CD4-positive, alpha-beta memory T cell (primary cell): ENCODE measurements at regions of chr5 and their contacts with region 1.

Region 1: DNA sequence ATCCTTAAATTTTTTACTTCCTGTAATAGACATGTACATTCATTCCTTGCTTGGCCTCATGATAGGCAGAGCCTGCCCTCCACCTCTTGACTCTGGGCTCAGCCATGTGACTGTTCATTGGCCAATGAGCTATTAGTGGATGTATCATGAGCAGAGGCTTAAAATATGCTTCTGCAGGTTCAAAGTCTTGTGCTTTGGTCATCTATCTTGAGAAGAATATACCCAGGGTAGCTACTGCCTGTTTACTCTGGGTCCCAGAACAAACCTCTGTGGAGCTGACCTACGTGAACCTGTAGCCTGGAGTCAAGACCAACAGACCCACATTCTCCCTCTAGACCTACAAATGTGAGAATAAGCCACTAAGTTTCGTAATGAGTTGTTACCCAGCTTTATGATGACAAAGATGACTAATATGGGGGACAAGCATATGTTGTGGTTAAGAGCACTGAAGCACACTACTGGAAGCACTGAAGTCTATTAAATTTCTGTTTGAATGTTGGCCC is 244.4 kb downstream of the MAST4 start:
- DNase-seq: no peak
- H3K4me3 ChIP-seq: no peak overlapping the region
- H3K4me3 Mint-ChIP-seq: no peak overlapping the region
- H3K27ac ChIP-seq: no peak overlapping the region
- H3K27ac Mint-ChIP-seq: no peak overlapping the region
- H3K4me1 ChIP-seq: no peaks in the 10 kb centered on the region
- H3K4me1 Mint-ChIP-seq: peaks cover 0 to 9% (median 0%) of the 10 kb centered on the region in 4 donors
- H3K27me3 ChIP-seq: no peaks in the 10 kb centered on the region
- H3K27me3 Mint-ChIP-seq: peaks cover 0 to 4% of the 10 kb centered on the region in 2 donors

Region 2: GRCh38 chr5:66828548-66829357 is 11.8 kb before region 1 on chr5:
- CTCF ChIA-PET with region 1: interaction called, 14 read pairs
- POLR2A ChIA-PET with region 1: interaction called, 3 read pairs
- intact Hi-C with region 1: no loop called
- DNase-seq: peak; percentile 58 to 79 (median 64)
- H3K4me3 ChIP-seq: peak overlapping the region; percentile 11 to 64
- H3K4me3 Mint-ChIP-seq: peak overlapping the region; percentile 74 to 88 (median 86)
- H3K27ac ChIP-seq: peak overlapping the region; percentile 48
- H3K27ac Mint-ChIP-seq: peak overlapping the region; percentile 20 to 95 (median 83)
- H3K4me1 ChIP-seq: peaks cover 13% of the 10 kb centered on the region
- H3K4me1 Mint-ChIP-seq: peaks cover 14 to 32% (median 17%) of the 10 kb centered on the region in 4 donors
- H3K27me3 ChIP-seq: no peaks in the 10 kb centered on the region
- H3K27me3 Mint-ChIP-seq: peaks cover 1 to 2% of the 10 kb centered on the region in 2 donors

Region 3: GRCh38 chr5:67361932-67362729 is 521.6 kb after region 1 on chr5:
- CTCF ChIA-PET with region 1: no interaction called
- POLR2A ChIA-PET with region 1: no interaction called
- intact Hi-C with region 1: no loop called
- DNase-seq: no peak
- H3K4me3 ChIP-seq: no peak overlapping the region
- H3K4me3 Mint-ChIP-seq: no peak overlapping the region
- H3K27ac ChIP-seq: no peak overlapping the region
- H3K27ac Mint-ChIP-seq: peak overlapping the region in 1 of 7 donors; percentile 58
- H3K4me1 ChIP-seq: peaks cover 12% of the 10 kb centered on the region
- H3K4me1 Mint-ChIP-seq: peaks cover 5 to 10% (median 8%) of the 10 kb centered on the region in 4 donors
- H3K27me3 ChIP-seq: no peaks in the 10 kb centered on the region
- H3K27me3 Mint-ChIP-seq: peaks cover 3 to 5% of the 10 kb centered on the region in 2 donors